ENCODE measurements at regions of chr4 and their contacts with region 1.

Region 1: GRCh38 chr4:102535398-102536082 is 34.4 kb downstream of the NFKB1 start:
- DNase-seq: peak in 1 of 5 donors; percentile 22
- H3K4me3 ChIP-seq: no peak overlapping the region
- H3K4me3 Mint-ChIP-seq: peak overlapping the region in 1 of 8 donors; percentile 39
- H3K27ac ChIP-seq: no peak overlapping the region
- H3K27ac Mint-ChIP-seq: peak overlapping the region in 3 of 7 donors; percentile 14 to 78 (median 19)
- H3K4me1 ChIP-seq: peaks cover 43% of the 10 kb centered on the region
- H3K4me1 Mint-ChIP-seq: peaks cover 28 to 69% (median 38%) of the 10 kb centered on the region in 4 donors
- H3K27me3 ChIP-seq: no peaks in the 10 kb centered on the region
- H3K27me3 Mint-ChIP-seq: no peaks in the 10 kb centered on the region

Region 2: GRCh38 chr4:102525097-102525496 is 10.4 kb before region 1 on chr4:
- CTCF ChIA-PET with region 1: interaction called, 6 read pairs
- POLR2A ChIA-PET with region 1: interaction called, 3 read pairs
- intact Hi-C with region 1: loop called (anchors 1 kb)
- DNase-seq: no peak
- H3K4me3 ChIP-seq: no peak overlapping the region
- H3K4me3 Mint-ChIP-seq: peak overlapping the region in 2 of 8 donors; percentile 10 to 57
- H3K27ac ChIP-seq: no peak overlapping the region
- H3K27ac Mint-ChIP-seq: peak overlapping the region in 6 of 7 donors; percentile 16 to 65 (median 51)
- H3K4me1 ChIP-seq: peaks cover 90% of the 10 kb centered on the region
- H3K4me1 Mint-ChIP-seq: peaks cover 59 to 94% (median 70%) of the 10 kb centered on the region in 4 donors
- H3K27me3 ChIP-seq: no peaks in the 10 kb centered on the region
- H3K27me3 Mint-ChIP-seq: no peaks in the 10 kb centered on the region

Region 3: GRCh38 chr4:102554482-102554881 is 18.9 kb after region 1 on chr4:
- CTCF ChIA-PET with region 1: interaction called, 7 read pairs
- POLR2A ChIA-PET with region 1: no interaction called
- intact Hi-C with region 1: loop called (anchors 2 kb)
- DNase-seq: no peak
- H3K4me3 ChIP-seq: no peak overlapping the region
- H3K4me3 Mint-ChIP-seq: peak overlapping the region in 1 of 8 donors; percentile 15
- H3K27ac ChIP-seq: no peak overlapping the region
- H3K27ac Mint-ChIP-seq: peak overlapping the region in 5 of 7 donors; percentile 10 to 70 (median 52)
- H3K4me1 ChIP-seq: peaks cover 82% of the 10 kb centered on the region
- H3K4me1 Mint-ChIP-seq: peaks cover 40 to 52% (median 46%) of the 10 kb centered on the region in 4 donors
- H3K27me3 ChIP-seq: no peaks in the 10 kb centered on the region
- H3K27me3 Mint-ChIP-seq: no peaks in the 10 kb centered on the region

Region 4: DNA sequence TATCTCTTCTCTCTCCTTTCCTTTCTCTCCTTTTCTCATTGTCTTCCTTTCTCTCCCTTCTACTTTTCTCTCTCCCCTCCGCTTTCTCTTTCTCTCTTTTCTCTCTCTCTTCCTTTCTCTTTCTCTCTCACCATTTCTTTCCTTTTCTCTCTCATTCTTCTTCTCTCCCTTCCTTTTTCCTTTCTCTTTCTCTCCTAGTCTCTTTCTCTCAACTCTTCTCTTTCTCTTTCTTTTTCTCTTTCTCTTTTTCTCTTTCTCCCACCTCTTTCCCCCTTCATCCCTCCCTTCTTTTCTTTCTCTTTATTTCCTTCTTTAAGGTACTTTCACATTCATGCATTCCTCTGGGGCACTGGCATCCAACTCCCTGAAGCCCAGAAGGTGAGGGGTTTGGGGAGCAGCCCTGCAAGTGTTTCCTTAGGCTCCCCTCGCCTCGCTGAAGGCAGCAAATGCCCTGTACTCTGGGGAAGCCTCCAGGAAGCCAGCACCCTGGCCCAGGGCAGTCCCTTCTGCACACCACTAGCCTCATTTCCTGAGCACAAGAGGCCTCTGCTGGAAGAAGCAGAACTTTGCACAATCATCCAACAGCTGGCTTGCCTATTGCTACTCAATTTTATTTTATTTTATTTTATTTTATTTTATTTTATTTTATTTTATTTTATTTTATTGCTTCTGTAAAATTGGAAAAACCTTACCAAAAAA is 89.8 kb after region 1 on chr4:
- CTCF ChIA-PET with region 1: no interaction called
- POLR2A ChIA-PET with region 1: no interaction called
- intact Hi-C with region 1: no loop called
- DNase-seq: peak; percentile 70 to 80 (median 76)
- H3K4me3 ChIP-seq: peak overlapping the region in 1 of 2 donors; percentile 32
- H3K4me3 Mint-ChIP-seq: peak overlapping the region in 7 of 8 donors; percentile 15 to 89 (median 79)
- H3K27ac ChIP-seq: no peak overlapping the region
- H3K27ac Mint-ChIP-seq: peak overlapping the region; percentile 82 to 93 (median 89)
- H3K4me1 ChIP-seq: peaks cover 43% of the 10 kb centered on the region
- H3K4me1 Mint-ChIP-seq: peaks cover 31 to 90% (median 53%) of the 10 kb centered on the region in 4 donors
- H3K27me3 ChIP-seq: no peaks in the 10 kb centered on the region
- H3K27me3 Mint-ChIP-seq: no peaks in the 10 kb centered on the region

Region 5: GRCh38 chr4:102696758-102697157 is 161.2 kb after region 1 on chr4:
- CTCF ChIA-PET with region 1: no interaction called
- POLR2A ChIA-PET with region 1: no interaction called
- intact Hi-C with region 1: no loop called
- DNase-seq: no peak
- H3K4me3 ChIP-seq: no peak overlapping the region
- H3K4me3 Mint-ChIP-seq: no peak overlapping the region
- H3K27ac ChIP-seq: no peak overlapping the region
- H3K27ac Mint-ChIP-seq: no peak overlapping the region
- H3K4me1 ChIP-seq: no peaks in the 10 kb centered on the region
- H3K4me1 Mint-ChIP-seq: no peaks in the 10 kb centered on the region
- H3K27me3 ChIP-seq: no peaks in the 10 kb centered on the region
- H3K27me3 Mint-ChIP-seq: no peaks in the 10 kb centered on the region

Measured in CD4-positive, alpha-beta memory T cell (primary cell).